Activated CD4-positive, alpha-beta memory T cell treated with anti-CD3 and anti-CD28 coated beads for 36 hours (primary cell): ENCODE measurements at regions of chr12 and their contacts with region 1.

Region 1: DNA sequence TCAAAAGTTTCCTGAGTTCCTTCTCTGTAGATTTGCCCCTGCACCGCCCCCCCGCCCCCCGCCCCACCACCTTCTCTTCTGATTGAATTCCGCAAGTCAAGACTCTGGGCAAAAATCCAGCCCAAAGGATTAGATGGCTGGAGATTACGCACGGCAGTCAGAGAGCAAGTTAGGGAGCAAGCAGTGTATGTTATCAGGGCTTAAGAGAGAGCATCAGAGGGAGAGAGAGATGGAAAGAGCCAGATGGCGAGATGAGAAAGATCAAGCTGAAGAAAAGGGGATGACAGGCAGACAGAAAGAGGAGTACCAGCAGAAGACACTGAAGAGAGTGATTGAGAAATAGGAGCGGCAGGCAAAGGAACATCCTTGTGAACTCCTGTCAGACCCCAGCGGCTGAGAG is 13.9 kb upstream of the ANKRD33 start:
- DNase-seq: no peak
- H3K4me3 Mint-ChIP-seq: no peak overlapping the region
- H3K27ac Mint-ChIP-seq: no peak overlapping the region
- H3K4me1 Mint-ChIP-seq: peaks cover 5% of the 10 kb centered on the region
- H3K27me3 Mint-ChIP-seq: peaks cover 17% of the 10 kb centered on the region

Region 2: DNA sequence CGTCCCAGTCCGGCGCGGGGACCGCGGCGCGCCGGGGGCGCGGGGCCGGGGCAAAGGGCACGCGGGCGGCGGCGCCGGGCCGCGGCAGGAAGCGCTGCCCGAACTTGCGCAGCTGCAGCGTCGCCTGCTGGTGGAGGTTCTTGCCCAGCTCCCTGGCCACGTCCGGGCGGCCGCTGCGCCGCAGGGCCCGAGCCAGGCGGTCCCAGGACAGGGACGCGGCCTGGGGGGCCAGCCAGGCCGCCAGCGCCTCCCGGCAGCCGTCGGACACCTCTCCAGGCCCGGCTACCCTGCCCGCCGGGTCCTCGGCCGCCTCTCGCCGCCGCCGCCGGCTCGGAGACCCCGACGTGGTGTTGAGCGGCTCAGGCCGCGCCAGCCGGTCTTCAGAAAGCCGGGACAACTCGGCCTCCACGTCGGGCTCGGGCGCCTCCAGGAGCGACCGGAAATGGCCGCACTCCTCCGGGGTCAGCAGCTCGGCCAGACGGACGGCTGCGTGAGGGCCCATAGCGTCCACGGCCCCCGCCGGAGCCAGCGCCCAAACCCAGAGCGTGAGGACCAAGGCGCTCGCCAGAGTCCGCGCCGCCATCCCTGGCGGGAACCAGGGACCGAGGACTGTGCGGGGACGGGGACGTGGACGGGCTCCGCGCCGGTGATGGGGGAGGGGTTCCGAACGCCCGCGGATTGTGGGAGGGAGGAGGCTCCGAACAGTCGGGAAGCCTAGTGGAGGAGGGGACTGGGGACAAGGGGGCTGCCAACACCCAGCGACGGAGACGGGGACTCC is 59.5 kb before region 1 on chr12:
- CTCF ChIA-PET with region 1: interaction called, 18 read pairs
- POLR2A ChIA-PET with region 1: no interaction called
- intact Hi-C with region 1: no loop called
- DNase-seq: peak; percentile 78
- H3K4me3 Mint-ChIP-seq: peak overlapping the region; percentile 54
- H3K27ac Mint-ChIP-seq: no peak overlapping the region
- H3K4me1 Mint-ChIP-seq: peaks cover 8% of the 10 kb centered on the region
- H3K27me3 Mint-ChIP-seq: peaks cover 3% of the 10 kb centered on the region

Region 3: GRCh38 chr12:51886021-51886322 is 12.0 kb after region 1 on chr12:
- CTCF ChIA-PET with region 1: interaction called, 18 read pairs
- POLR2A ChIA-PET with region 1: no interaction called
- intact Hi-C with region 1: no loop called
- DNase-seq: peak; percentile 69
- H3K4me3 Mint-ChIP-seq: peak overlapping the region; percentile 35
- H3K27ac Mint-ChIP-seq: peak overlapping the region; percentile 56
- H3K4me1 Mint-ChIP-seq: peaks cover 14% of the 10 kb centered on the region
- H3K27me3 Mint-ChIP-seq: no peaks in the 10 kb centered on the region